BJ (cell line): ENCODE measurements at regions of chr6 and their contacts with region 1.

Region 1: DNA sequence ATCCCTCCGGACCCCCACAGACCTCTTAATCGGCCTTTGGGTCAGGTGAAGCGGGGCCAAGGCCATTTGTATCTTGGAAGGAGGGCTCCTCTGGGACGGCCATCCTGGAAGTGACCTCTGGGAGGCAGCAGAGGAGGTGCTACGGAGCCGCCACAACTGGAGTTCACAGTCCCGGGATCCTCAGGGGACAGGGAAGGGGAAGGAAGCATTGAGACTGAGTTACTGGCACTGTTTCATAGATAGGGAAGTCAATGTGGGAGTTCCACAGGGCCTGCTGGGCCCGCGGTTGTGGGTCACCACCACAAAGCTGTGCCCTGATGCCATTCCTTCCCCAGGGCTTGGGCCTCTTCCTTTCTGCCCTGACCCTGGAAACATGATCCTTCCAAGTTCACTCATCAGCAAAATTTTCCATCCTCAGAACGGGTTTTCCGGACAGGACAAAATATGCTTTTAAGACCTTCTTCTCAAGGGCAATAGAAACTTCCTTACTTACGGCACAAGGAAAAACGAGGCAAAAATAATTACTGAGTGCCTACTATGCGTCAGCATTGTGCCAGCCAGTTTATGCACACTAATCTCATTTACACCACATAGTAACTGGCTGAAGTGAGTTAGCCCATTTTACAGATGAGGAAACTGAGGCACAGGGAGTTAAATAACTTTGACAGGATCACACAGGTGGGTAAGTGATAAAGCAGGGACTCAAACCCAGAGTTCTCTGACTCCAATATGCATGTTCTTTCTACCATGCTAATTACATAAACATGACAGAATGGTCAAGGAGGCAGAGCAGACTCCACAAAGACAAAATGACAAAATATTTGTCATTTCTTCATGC is 143.8 kb downstream of the UNC5CL start:
- DNase-seq: no peak
- H3K4me3 ChIP-seq: no peak overlapping the region
- H3K27me3 ChIP-seq: peaks cover 2% of the 10 kb centered on the region; the same call in 1 of the 2 replicates
- CTCF ChIP-seq: peak; percentile 77

Region 2: DNA sequence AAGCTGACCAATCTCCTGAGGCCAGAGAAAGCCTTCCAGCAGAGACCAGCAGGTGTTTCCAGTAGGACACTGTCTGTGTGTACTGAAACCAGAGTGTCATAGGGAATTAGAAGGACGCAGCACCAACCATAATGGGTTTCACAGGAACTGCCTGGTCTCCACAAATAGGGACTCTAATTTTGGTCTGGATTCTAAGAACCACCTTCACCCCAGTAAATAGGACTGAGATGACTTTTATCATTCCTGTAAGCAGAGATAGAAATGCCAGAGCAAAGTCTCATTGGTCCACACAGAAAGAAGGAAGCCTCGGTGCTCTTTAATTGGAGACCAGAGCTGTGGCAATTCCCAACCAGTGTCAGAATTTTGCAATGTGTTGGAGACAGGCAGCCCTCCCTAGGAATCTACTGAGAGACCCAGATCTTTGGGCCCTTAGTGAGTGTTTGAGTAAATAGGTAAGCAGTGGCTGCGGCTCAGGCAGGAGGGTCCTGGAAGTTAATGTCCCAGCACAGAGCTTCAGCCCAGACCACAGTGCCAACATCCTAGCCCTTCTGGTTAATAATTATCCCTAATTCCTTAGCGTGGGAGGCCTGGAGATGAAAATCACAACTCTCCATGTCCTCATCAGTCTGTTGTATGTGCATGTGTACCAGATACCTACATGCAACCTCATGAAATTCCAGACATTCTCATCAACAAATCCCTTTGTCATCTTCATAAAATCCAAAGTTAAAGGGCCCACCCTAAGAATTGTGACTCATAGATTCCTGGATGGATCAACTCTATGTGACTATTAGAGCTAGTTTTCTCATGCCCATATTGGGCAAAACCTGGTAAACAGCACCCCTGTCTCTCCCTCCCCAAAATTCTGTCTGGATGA is 62.7 kb after region 1 on chr6:
- CTCF ChIA-PET with region 1: interaction called, 12 read pairs
- POLR2A ChIA-PET with region 1: no interaction called
- DNase-seq: peak; percentile 83
- H3K4me3 ChIP-seq: no peak overlapping the region
- H3K27me3 ChIP-seq: no peaks in the 10 kb centered on the region
- CTCF ChIP-seq: no peak

Region 3: GRCh38 chr6:41021832-41022231 is 126.7 kb after region 1 on chr6:
- CTCF ChIA-PET with region 1: interaction called, 184 read pairs
- POLR2A ChIA-PET with region 1: no interaction called
- DNase-seq: peak; percentile 25
- H3K4me3 ChIP-seq: no peak overlapping the region
- H3K27me3 ChIP-seq: no peaks in the 10 kb centered on the region; the same call in 1 of the 2 replicates
- CTCF ChIP-seq: peak; percentile 54